ENCODE measurements at regions of chr6 and their contacts with region 1.

Region 1: DNA sequence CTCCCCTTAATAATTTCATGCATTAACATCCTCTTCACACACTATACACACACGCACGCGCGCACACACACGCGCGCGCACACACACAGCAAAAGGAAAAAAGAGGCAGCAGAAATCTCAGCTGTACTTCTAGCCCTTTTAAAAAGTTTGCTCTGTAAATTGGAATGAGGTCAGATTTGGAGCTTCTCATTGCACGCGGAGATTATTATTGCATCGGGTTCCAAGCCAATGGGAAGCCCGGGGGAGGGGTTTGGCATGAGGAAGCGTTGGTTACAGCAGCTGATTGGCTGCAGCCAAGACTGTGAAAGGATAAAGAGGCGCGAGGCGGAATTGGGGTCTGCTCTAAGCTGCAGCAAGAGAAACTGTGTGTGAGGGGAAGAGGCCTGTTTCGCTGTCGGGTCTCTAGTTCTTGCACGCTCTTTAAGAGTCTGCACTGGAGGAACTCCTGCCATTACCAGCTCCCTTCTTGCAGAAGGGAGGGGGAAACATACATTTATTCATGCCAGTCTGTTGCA is at the start of gene SOX4:
- DNase-seq: peak; percentile 93
- ATAC-seq: peak; percentile 76
- H3K4me3 ChIP-seq: peak within 1 kb of the TSS; percentile 69 to 81
- H3K27ac ChIP-seq: peak within 1 kb of the TSS; percentile 87
- H3K4me1 ChIP-seq: peaks cover 9 to 36% of the 10 kb centered on the region in 2 experiments
- H3K27me3 ChIP-seq: no peaks in the 10 kb centered on the region
- CTCF ChIP-seq: no peak
- POLR2A ChIP-seq: peak; percentile 99
- RAD21 ChIP-seq: no peak
- total RNA-seq, gene SOX4: 67.0 TPM

Region 2: DNA sequence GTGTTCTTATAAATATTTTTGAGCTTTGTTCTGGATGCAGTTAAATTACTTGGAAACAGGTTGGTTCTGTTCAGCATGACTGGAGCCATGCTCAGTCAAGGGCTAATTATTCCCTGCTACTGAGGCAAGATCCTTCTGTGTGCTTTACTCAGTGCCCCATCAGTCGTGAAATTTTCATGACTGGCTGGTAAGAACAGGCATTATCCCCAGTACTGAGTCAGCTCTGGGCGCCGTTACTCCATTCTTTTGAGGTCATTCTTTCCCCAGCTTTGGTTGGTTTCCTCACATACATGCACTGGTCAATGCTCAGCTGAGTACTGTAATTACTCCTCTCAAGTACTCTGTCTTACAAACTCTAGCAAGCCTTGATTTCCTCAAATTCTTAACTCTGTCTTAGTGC is 987.9 kb before region 1 on chr6:
- CTCF ChIA-PET with region 1: no interaction called
- POLR2A ChIA-PET with region 1: no interaction called
- RAD21 ChIA-PET with region 1: interaction called in 1 of 2 experiments, 10 read pairs
- intact Hi-C with region 1: no loop called
- DNase-seq: no peak
- ATAC-seq: no peak; the same call in 1 of the 2 replicates
- H3K4me3 ChIP-seq: no peak overlapping the region
- H3K27ac ChIP-seq: no peak overlapping the region
- H3K4me1 ChIP-seq: peaks cover 0 to 19% of the 10 kb centered on the region in 2 experiments; a peak in 2 of 4 replicates
- H3K27me3 ChIP-seq: no peaks in the 10 kb centered on the region
- CTCF ChIP-seq: no peak
- POLR2A ChIP-seq: no peak
- RAD21 ChIP-seq: no peak

Region 3: GRCh38 chr6:20877008-20877937 is 716.2 kb before region 1 on chr6:
- CTCF ChIA-PET with region 1: interaction called, 42 read pairs
- POLR2A ChIA-PET with region 1: interaction called, 31 read pairs
- RAD21 ChIA-PET with region 1: interaction called, 4 to 13 read pairs
- intact Hi-C with region 1: loop called (anchors 1 kb)
- DNase-seq: peak; percentile 95
- ATAC-seq: peak; percentile 95
- H3K4me3 ChIP-seq: peak overlapping the region in 1 of 2 experiments; percentile 27; a peak in 2 of 4 replicates
- H3K27ac ChIP-seq: peak overlapping the region; percentile 95
- H3K4me1 ChIP-seq: peaks cover 49 to 66% of the 10 kb centered on the region in 2 experiments
- H3K27me3 ChIP-seq: no peaks in the 10 kb centered on the region
- CTCF ChIP-seq: no peak
- POLR2A ChIP-seq: no peak
- RAD21 ChIP-seq: peak; percentile 59

Region 4: GRCh38 chr6:21003780-21004541 is 589.5 kb before region 1 on chr6:
- CTCF ChIA-PET with region 1: no interaction called
- POLR2A ChIA-PET with region 1: interaction called, 4 read pairs
- RAD21 ChIA-PET with region 1: no interaction called
- intact Hi-C with region 1: loop called (anchors 5 kb)
- DNase-seq: no peak
- ATAC-seq: peak; percentile 8; the same call in 1 of the 2 replicates
- H3K4me3 ChIP-seq: no peak overlapping the region
- H3K27ac ChIP-seq: peak overlapping the region; percentile 87
- H3K4me1 ChIP-seq: peaks cover 72 to 76% of the 10 kb centered on the region in 2 experiments
- H3K27me3 ChIP-seq: no peaks in the 10 kb centered on the region
- CTCF ChIP-seq: no peak
- POLR2A ChIP-seq: no peak
- RAD21 ChIP-seq: no peak

Region 5: GRCh38 chr6:21109391-21110178 is 483.9 kb before region 1 on chr6:
- CTCF ChIA-PET with region 1: no interaction called
- POLR2A ChIA-PET with region 1: interaction called, 4 read pairs
- RAD21 ChIA-PET with region 1: no interaction called
- intact Hi-C with region 1: loop called (anchors 10 kb)
- DNase-seq: peak; percentile 90
- ATAC-seq: peak; percentile 89
- H3K4me3 ChIP-seq: peak overlapping the region in 1 of 2 experiments; percentile 24; a peak in 2 of 4 replicates
- H3K27ac ChIP-seq: peak overlapping the region; percentile 89
- H3K4me1 ChIP-seq: peaks cover 57 to 62% of the 10 kb centered on the region in 2 experiments
- H3K27me3 ChIP-seq: no peaks in the 10 kb centered on the region
- CTCF ChIP-seq: no peak
- POLR2A ChIP-seq: no peak
- RAD21 ChIP-seq: peak; percentile 44

Region 6: GRCh38 chr6:21438237-21438985 is 155.1 kb before region 1 on chr6:
- CTCF ChIA-PET with region 1: no interaction called
- POLR2A ChIA-PET with region 1: no interaction called
- RAD21 ChIA-PET with region 1: no interaction called
- intact Hi-C with region 1: no loop called
- DNase-seq: no peak
- ATAC-seq: peak; percentile 47; the same call in 1 of the 2 replicates
- H3K4me3 ChIP-seq: no peak overlapping the region
- H3K27ac ChIP-seq: no peak overlapping the region
- H3K4me1 ChIP-seq: peaks cover 5% of the 10 kb centered on the region in 2 experiments; a peak in 2 of 4 replicates
- H3K27me3 ChIP-seq: no peaks in the 10 kb centered on the region
- CTCF ChIP-seq: no peak
- POLR2A ChIP-seq: no peak
- RAD21 ChIP-seq: no peak

Region 7: DNA sequence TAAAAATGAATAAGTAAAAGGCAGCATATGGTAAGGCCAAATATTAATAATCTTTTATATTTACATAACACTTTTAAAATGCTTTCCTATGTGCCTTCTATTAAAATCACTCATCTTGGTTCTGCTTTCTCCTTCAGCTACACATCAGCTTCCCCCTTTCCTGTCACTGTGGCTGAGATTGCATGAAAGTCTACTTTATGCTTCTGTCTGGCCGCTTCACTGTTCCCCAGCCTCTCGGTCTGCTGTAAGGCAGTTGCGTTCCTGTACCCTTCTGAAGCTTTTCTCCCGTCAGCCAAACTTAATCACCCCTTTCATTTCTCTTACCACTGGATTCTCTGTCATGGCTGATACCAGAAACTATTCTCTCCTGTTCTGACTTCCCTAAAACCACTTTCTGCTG is 34.7 kb after region 1 on chr6:
- CTCF ChIA-PET with region 1: no interaction called
- POLR2A ChIA-PET with region 1: no interaction called
- RAD21 ChIA-PET with region 1: no interaction called
- intact Hi-C with region 1: no loop called
- DNase-seq: no peak
- ATAC-seq: no peak
- H3K4me3 ChIP-seq: no peak overlapping the region
- H3K27ac ChIP-seq: no peak overlapping the region
- H3K4me1 ChIP-seq: 0 out of 4 replicates have a peak, but pooled peaks cover 0 to 3% of the 10 kb centered on the region in 2 experiments
- H3K27me3 ChIP-seq: no peaks in the 10 kb centered on the region
- CTCF ChIP-seq: no peak
- POLR2A ChIP-seq: no peak
- RAD21 ChIP-seq: no peak

Region 8: DNA sequence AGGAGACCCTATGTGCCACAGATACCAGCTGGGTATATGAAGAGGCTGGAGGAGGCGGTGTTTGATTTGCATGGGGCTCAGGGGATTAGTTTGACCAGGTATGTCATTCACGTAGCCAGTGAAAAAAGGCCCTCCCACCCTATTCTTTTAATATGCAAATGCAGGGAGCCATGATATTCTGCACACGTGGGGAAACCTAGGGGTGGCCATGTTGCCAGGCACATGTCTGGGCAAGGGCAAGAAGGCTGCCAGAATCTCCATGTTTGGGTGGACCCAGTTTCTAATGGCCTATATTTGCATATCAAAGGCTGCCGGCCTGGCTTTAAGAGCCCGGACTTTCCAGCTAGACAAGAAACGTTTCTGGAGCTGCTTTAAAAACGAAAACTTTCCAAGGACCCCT is 60.4 kb after region 1 on chr6:
- CTCF ChIA-PET with region 1: no interaction called
- POLR2A ChIA-PET with region 1: no interaction called
- RAD21 ChIA-PET with region 1: no interaction called
- intact Hi-C with region 1: no loop called
- DNase-seq: no peak
- ATAC-seq: no peak
- H3K4me3 ChIP-seq: no peak overlapping the region
- H3K27ac ChIP-seq: no peak overlapping the region
- H3K4me1 ChIP-seq: no peaks in the 10 kb centered on the region
- H3K27me3 ChIP-seq: no peaks in the 10 kb centered on the region
- CTCF ChIP-seq: no peak
- POLR2A ChIP-seq: no peak
- RAD21 ChIP-seq: no peak

Region 9: DNA sequence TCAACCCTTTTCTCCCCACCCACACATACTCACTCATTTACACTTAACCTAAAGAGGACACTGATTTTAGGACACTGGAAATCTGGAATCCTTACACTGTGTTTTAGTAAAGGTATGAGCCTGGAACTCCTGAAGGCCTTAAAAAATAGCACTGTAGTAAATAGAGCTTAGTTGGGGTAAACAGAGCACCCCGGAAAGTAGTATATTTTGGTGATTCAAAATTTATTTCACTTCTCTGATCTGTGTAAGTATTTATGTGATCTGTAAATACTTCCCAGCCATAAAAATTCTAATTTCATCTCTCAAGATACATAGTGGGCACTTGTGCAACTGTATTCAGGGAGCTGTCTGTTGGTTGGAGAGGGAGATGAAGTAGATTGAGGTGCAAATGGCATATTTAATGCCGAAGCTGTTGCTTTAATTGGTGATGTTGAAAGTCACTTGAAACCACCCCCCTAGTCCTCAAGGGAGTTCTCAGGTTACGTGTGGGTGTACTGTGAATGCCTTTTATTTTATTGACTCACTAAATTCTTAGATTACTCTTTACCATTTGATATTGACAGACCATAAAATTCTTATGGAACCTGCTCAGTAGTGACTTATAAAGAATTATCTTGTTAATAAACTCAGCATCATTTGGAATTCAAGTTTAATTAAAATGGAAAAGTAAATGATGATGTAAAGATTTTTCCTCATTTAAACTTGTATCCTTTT is 155.0 kb after region 1 on chr6:
- CTCF ChIA-PET with region 1: interaction called, 3 read pairs
- POLR2A ChIA-PET with region 1: interaction called, 8 read pairs
- RAD21 ChIA-PET with region 1: no interaction called
- intact Hi-C with region 1: loop called (anchors 5 kb)
- DNase-seq: no peak
- ATAC-seq: peak; percentile 67
- H3K4me3 ChIP-seq: no peak overlapping the region
- H3K27ac ChIP-seq: no peak overlapping the region
- H3K4me1 ChIP-seq: peaks cover 25 to 47% of the 10 kb centered on the region in 2 experiments
- H3K27me3 ChIP-seq: no peaks in the 10 kb centered on the region
- CTCF ChIP-seq: no peak
- POLR2A ChIP-seq: no peak
- RAD21 ChIP-seq: no peak

Region 10: DNA sequence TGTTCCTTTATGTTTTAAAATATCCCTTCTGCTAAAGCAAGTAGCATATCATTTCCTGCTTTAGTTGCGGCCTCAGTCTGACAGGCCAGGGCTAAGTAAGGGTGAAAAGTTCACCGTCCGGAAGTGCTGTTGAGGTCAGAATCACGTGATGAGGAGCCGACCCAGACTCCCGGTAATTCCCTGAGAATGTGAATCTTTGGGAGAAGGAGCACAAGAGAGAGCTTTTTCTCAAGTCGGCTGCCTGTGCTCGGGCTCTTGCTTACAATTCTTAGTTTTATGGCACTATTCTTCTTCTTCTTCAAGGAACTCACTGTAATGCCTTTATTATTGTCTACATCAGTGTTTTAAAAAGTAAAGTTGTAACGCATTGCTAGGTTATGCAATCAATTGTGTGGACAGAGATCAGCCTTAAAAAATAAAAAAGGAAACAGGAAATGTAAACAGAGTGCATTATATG is 394.1 kb after region 1 on chr6:
- CTCF ChIA-PET with region 1: no interaction called
- POLR2A ChIA-PET with region 1: no interaction called
- RAD21 ChIA-PET with region 1: no interaction called
- intact Hi-C with region 1: no loop called
- DNase-seq: peak; percentile 58
- ATAC-seq: peak; percentile 93
- H3K4me3 ChIP-seq: peak overlapping the region; percentile 6 to 28; a peak in 2 of 4 replicates
- H3K27ac ChIP-seq: no peak overlapping the region
- H3K4me1 ChIP-seq: peaks cover 7 to 16% of the 10 kb centered on the region in 2 experiments
- H3K27me3 ChIP-seq: no peaks in the 10 kb centered on the region
- CTCF ChIP-seq: no peak
- POLR2A ChIP-seq: no peak
- RAD21 ChIP-seq: no peak

Region 11: DNA sequence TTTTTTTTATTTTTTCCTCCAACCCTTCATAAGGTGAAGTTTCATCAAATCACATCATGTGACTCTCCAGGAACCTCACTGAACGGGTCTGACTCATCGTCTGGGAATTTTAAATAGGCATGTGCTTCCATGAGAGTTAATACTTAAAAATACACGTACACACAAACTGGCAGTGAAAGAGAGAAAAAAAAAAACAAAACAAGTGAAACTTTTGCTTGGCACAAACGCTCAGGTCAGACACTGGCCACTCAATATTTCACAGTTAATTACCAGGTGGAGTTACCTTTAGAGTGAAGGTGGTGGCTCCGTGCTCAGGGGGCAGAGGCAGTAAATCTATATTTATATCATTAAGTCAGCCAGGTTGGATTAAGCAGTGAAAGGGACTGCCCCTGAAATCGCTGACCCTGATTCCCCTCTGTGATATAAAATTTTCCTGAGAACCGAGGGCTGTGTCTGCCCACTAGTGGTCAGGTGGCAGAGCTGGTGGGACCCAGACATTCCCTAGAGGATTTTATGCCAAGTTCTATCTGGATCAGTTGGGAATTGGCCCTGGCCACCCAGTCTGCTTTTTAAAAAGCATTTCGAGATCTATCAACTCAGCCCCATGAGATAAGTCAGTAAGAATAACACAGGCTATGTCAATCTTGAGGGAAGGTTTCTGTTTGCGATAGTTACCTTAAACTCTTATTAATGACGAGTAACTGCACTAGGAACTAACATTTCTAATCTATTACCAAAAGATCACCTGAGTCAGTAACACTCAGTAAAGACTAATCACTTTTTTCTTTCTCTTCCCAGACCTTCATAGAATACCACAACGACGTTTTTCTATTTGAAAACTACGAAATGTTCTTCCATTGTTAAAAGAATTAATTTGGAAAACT is 1235.0 kb after region 1 on chr6:
- CTCF ChIA-PET with region 1: no interaction called
- POLR2A ChIA-PET with region 1: no interaction called
- RAD21 ChIA-PET with region 1: no interaction called
- intact Hi-C with region 1: loop called (anchors 5 kb)
- DNase-seq: peak; percentile 53
- ATAC-seq: peak; percentile 75
- H3K4me3 ChIP-seq: no peak overlapping the region
- H3K27ac ChIP-seq: no peak overlapping the region
- H3K4me1 ChIP-seq: peaks cover 0 to 7% of the 10 kb centered on the region in 2 experiments; a peak in 2 of 4 replicates
- H3K27me3 ChIP-seq: no peaks in the 10 kb centered on the region
- CTCF ChIP-seq: peak; percentile 21 to 59 (median 58); a peak in 5 of 6 replicates
- POLR2A ChIP-seq: no peak
- RAD21 ChIP-seq: peak; percentile 45; the same call in 1 of the 2 replicates

Measured in HCT116 (cell line).